Lower lobe of right lung (tissue), 2 donors: ENCODE measurements at regions of chr4 and their contacts with region 1.

Region 1: GRCh38 chr4:110211007-110211769 is 12.8 kb upstream of the ELOVL6 start:
- DNase-seq: no peak
- ATAC-seq: peak in 1 of 2 donors; percentile 68
- H3K4me3 ChIP-seq: no peak overlapping the region
- H3K27ac ChIP-seq: no peak overlapping the region
- H3K4me1 ChIP-seq: no peaks in the 10 kb centered on the region
- H3K27me3 ChIP-seq: no peaks in the 10 kb centered on the region
- CTCF ChIP-seq: peak; percentile 80

Region 2: DNA sequence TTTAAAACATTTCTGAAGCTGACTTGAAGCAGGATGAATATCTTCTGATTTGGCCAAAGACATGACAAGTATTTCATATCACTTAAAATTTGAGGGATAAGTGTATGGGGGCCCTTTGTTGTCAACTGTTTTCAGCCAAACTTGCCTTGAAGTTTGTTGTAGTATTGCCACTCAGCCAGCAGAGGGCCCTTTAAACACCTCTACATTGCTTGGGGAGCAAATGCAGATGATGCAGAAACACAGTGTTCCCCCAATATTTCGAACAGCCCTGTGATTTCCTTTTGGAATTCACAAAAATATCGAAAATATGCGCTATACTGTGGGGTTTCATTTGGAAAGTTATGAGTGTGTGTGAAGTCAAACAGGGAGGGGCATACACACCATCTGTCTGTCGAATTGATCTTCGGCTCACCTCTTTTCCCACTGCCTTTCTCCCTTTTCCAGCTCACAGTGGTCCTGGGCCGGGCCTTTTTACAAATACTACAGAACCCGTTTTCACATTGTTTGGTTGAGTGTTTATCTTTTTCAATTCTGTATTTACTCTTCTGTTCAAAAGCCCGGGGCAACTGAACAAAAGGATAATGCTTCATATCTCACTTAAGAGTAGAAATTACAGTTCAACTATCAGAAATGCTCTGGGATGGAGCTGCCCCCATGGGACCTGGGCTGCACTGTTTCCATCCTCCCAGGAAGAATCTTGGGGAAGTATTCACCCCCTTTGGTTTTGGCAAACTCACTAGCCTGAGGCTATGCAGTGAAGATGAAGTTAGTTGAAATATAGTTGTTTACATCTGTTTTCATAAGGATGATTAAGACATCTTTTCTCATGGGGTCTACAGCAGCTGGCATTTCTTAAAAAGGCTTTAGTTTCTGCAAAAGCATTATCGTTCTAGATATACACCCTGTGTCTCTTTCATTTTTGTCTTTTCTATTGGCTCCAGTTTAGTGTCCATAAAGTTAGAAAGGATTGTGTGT is 160.9 kb before region 1 on chr4:
- intact Hi-C with region 1: loop called (anchors 10 kb)
- DNase-seq: no peak
- ATAC-seq: peak; percentile 48 to 57
- H3K4me3 ChIP-seq: no peak overlapping the region
- H3K27ac ChIP-seq: no peak overlapping the region
- H3K4me1 ChIP-seq: no peaks in the 10 kb centered on the region
- H3K27me3 ChIP-seq: no peaks in the 10 kb centered on the region
- CTCF ChIP-seq: peak; percentile 75